Heart left ventricle (tissue), 16 donors: ENCODE measurements at regions of chr6 and their contacts with region 1.

Region 1: GRCh38 chr6:116287689-116288282 is 8.1 kb upstream of the TSPYL1 start:
- DNase-seq: no peak
- ATAC-seq: peak in 3 of 4 donors; percentile 62 to 66 (median 63)
- H3K4me3 ChIP-seq: no peak overlapping the region
- H3K27ac ChIP-seq: no peak overlapping the region
- H3K4me1 ChIP-seq: peaks cover 0 to 7% (median 2%) of the 10 kb centered on the region in 12 donors
- H3K27me3 ChIP-seq: no peaks in the 10 kb centered on the region
- CTCF ChIP-seq: peak; percentile 75 to 96 (median 88)
- POLR2A ChIP-seq: no peak

Region 2: GRCh38 chr6:116371120-116371917 is 83.5 kb after region 1 on chr6:
- intact Hi-C with region 1: loop called in 3 of 10 experiments (anchors 5 to 10 kb)
- DNase-seq: peak; percentile 68 to 85 (median 81)
- ATAC-seq: peak; percentile 33 to 82 (median 78)
- H3K4me3 ChIP-seq: peak overlapping the region; percentile 46 to 89 (median 78)
- H3K27ac ChIP-seq: peak overlapping the region; percentile 81 to 96 (median 84)
- H3K4me1 ChIP-seq: peaks cover 0 to 57% (median 6%) of the 10 kb centered on the region in 12 donors
- H3K27me3 ChIP-seq: no peaks in the 10 kb centered on the region
- CTCF ChIP-seq: no peak
- POLR2A ChIP-seq: no peak

Region 3: GRCh38 chr6:116444092-116444491 is 156.3 kb after region 1 on chr6:
- intact Hi-C with region 1: loop called in 6 of 10 experiments (anchors 5 to 10 kb)
- DNase-seq: no peak
- ATAC-seq: peak in 3 of 4 donors; percentile 53 to 61 (median 59)
- H3K4me3 ChIP-seq: no peak overlapping the region
- H3K27ac ChIP-seq: no peak overlapping the region
- H3K4me1 ChIP-seq: peaks cover 0 to 43% (median 0%) of the 10 kb centered on the region in 12 donors
- H3K27me3 ChIP-seq: no peaks in the 10 kb centered on the region
- CTCF ChIP-seq: peak; percentile 8 to 62 (median 41)
- POLR2A ChIP-seq: no peak